Esophagus squamous epithelium (tissue), 5 donors: ENCODE measurements at regions of chr1 and their contacts with region 1.

Region 1: GRCh38 chr1:101238681-101239094 is 1.9 kb downstream of the S1PR1 start:
- DNase-seq: no peak
- H3K4me3 ChIP-seq: peak overlapping the region; percentile 2 to 77 (median 58)
- H3K27ac ChIP-seq: peak overlapping the region; percentile 47 to 88 (median 78)
- H3K4me1 ChIP-seq: peaks cover 5 to 42% (median 19%) of the 10 kb centered on the region in 3 donors
- H3K27me3 ChIP-seq: peaks cover 0 to 41% (median 0%) of the 10 kb centered on the region in 4 donors
- CTCF ChIP-seq: peak; percentile 72 to 90 (median 88)
- POLR2A ChIP-seq: no peak

Region 2: GRCh38 chr1:100921109-100921706 is 317.5 kb before region 1 on chr1:
- intact Hi-C with region 1: loop called (anchors 5 kb)
- DNase-seq: no peak
- H3K4me3 ChIP-seq: no peak overlapping the region
- H3K27ac ChIP-seq: no peak overlapping the region
- H3K4me1 ChIP-seq: no peaks in the 10 kb centered on the region
- H3K27me3 ChIP-seq: no peaks in the 10 kb centered on the region
- CTCF ChIP-seq: peak; percentile 37 to 83 (median 72)
- POLR2A ChIP-seq: no peak